HepG2 (cell line): ENCODE measurements at regions of chr1 and their contacts with region 1.

Region 1: DNA sequence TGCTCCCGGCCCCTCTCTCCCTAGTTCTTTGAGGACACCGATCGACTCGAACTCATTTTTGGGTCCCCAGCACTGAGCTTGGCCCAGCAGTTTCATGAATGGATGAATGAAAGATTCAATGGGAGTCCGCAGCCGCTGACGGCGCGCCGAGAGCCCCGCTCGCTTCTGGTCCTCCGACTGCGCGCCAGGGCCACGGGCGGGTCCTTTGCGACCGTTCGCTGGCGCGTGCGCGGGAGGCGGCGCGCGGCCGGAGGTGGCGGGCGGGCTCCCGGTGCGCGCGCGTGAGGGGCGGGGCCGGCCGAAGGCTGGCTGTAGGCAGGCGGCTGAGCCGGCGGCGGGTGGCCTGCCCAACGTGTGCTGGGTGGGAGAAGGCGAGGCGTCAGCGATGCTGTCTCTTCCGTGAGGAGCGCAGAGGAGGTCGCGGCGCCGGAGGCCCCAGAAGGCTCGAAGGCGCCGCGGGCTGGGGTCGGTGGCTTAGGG is at the start of gene MAST2:
- DNase-seq: peak; percentile 67
- ATAC-seq: peak; percentile 89
- H3K4me3 ChIP-seq: peak within 1 kb of the TSS; percentile 81 to 97 (median 90)
- H3K27ac ChIP-seq: peak within 1 kb of the TSS; percentile 53
- H3K4me1 ChIP-seq: peaks cover 32% of the 10 kb centered on the region
- H3K27me3 ChIP-seq: no peaks in the 10 kb centered on the region
- CTCF ChIP-seq: no peak
- EP300 ChIP-seq: no peak
- POLR2A ChIP-seq: peak; percentile 46 to 80
- RAD21 ChIP-seq: 0 out of 2 replicates have a peak, but pooled peaks have one; percentile 40
- total RNA-seq, gene MAST2: 14.3 and 15.3 TPM in 2 replicates

Region 2: GRCh38 chr1:45750298-45751038 is 52.9 kb before region 1 on chr1 and contains the start of gene IPP:
- CTCF ChIA-PET with region 1: no interaction called
- POLR2A ChIA-PET with region 1: no interaction called
- in situ Hi-C with region 1: no loop called
- intact Hi-C with region 1: loop called (anchors 2 kb)
- DNase-seq: peak; percentile 95
- ATAC-seq: peak; percentile 93
- H3K4me3 ChIP-seq: peak within 1 kb of the TSS; percentile 72 to 86 (median 79)
- H3K27ac ChIP-seq: peak within 1 kb of the TSS; percentile 97
- H3K4me1 ChIP-seq: peaks cover 51% of the 10 kb centered on the region
- H3K27me3 ChIP-seq: no peaks in the 10 kb centered on the region
- CTCF ChIP-seq: peak; percentile 81
- EP300 ChIP-seq: peak in 1 of 2 experiments; percentile 27; a peak in 2 of 4 replicates
- POLR2A ChIP-seq: peak; percentile 94 to 95
- RAD21 ChIP-seq: peak; percentile 79
- total RNA-seq, gene IPP: 9.7 and 14.1 TPM in 2 replicates

Region 3: DNA sequence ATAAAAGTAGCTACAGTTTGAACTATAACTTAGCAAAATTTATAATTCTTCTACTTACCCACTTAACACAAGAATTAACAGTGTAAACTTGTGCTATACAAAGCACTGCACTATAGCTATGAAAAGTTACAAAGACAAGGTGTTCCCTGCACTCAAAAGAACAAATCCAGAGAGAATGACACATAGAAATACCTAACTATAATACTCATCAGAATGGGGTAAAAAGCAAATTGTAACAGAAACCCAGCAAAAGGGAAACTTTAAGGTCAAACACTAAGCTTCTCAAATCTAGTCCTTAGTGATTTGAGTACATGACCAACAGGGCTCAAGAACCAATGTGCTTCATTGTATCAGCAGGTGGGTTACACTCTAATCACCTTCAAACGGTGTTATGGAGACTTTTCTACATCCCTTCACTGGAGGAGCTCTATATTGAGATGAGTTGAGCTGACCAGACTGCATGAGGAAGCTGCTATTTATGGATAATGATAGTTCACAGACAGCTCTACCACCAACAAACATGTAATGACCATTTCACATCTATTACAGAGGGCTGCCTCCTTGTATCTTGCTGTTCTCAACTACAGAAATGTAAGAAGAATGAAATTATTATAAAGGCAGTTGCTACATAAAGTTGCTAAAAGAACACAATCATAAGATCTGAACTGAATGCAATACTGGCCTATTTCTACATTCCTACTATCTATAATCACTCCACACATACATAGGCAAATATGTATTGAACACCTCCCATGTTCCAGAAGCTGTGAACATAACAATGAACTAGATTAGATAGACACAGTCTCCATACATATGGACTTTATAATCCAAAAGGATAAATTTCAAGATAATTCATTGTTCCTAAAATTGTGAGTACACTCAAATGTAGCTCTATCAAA is 281.5 kb after region 1 on chr1:
- CTCF ChIA-PET with region 1: no interaction called
- POLR2A ChIA-PET with region 1: no interaction called
- in situ Hi-C with region 1: no loop called
- intact Hi-C with region 1: no loop called
- DNase-seq: no peak
- ATAC-seq: no peak
- H3K4me3 ChIP-seq: no peak overlapping the region
- H3K27ac ChIP-seq: no peak overlapping the region
- H3K4me1 ChIP-seq: no peaks in the 10 kb centered on the region
- H3K27me3 ChIP-seq: no peaks in the 10 kb centered on the region
- CTCF ChIP-seq: no peak
- EP300 ChIP-seq: no peak
- POLR2A ChIP-seq: no peak
- RAD21 ChIP-seq: no peak